PC-3 (cell line): ENCODE measurements at regions of chr13 and their contacts with region 1.

Region 1: GRCh38 chr13:83498495-83499190 is 383.6 kb downstream of the SLITRK1 start:
- DNase-seq: peak; percentile 80
- ATAC-seq: peak; percentile 82
- H3K4me3 ChIP-seq: peak overlapping the region; percentile 30; the same call in 1 of the 2 replicates
- H3K27ac ChIP-seq: peak overlapping the region; percentile 99
- H3K4me1 ChIP-seq: peaks cover 33% of the 10 kb centered on the region
- H3K27me3 ChIP-seq: no peaks in the 10 kb centered on the region
- CTCF ChIP-seq: no peak

Region 2: GRCh38 chr13:83221813-83222241 is 276.8 kb before region 1 on chr13:
- CTCF ChIA-PET with region 1: no interaction called
- POLR2A ChIA-PET with region 1: no interaction called
- intact Hi-C with region 1: loop called (anchors 5 kb)
- DNase-seq: peak; percentile 93
- ATAC-seq: peak; percentile 84
- H3K4me3 ChIP-seq: no peak overlapping the region; the same call in 1 of the 2 replicates
- H3K27ac ChIP-seq: peak overlapping the region; percentile 98
- H3K4me1 ChIP-seq: peaks cover 23% of the 10 kb centered on the region
- H3K27me3 ChIP-seq: no peaks in the 10 kb centered on the region
- CTCF ChIP-seq: no peak

Region 3: GRCh38 chr13:83272652-83273240 is 225.9 kb before region 1 on chr13:
- CTCF ChIA-PET with region 1: no interaction called
- POLR2A ChIA-PET with region 1: no interaction called
- intact Hi-C with region 1: no loop called
- DNase-seq: no peak
- ATAC-seq: no peak
- H3K4me3 ChIP-seq: no peak overlapping the region
- H3K27ac ChIP-seq: no peak overlapping the region
- H3K4me1 ChIP-seq: 0 out of 2 replicates have a peak, but pooled peaks cover 2% of the 10 kb centered on the region
- H3K27me3 ChIP-seq: no peaks in the 10 kb centered on the region
- CTCF ChIP-seq: no peak

Region 4: GRCh38 chr13:83350569-83350968 is 148.1 kb before region 1 on chr13:
- CTCF ChIA-PET with region 1: no interaction called
- POLR2A ChIA-PET with region 1: no interaction called
- intact Hi-C with region 1: loop called (anchors 10 kb)
- DNase-seq: peak; percentile 71
- ATAC-seq: peak; percentile 95
- H3K4me3 ChIP-seq: peak overlapping the region; percentile 29; the same call in 1 of the 2 replicates
- H3K27ac ChIP-seq: peak overlapping the region; percentile 72
- H3K4me1 ChIP-seq: peaks cover 16% of the 10 kb centered on the region
- H3K27me3 ChIP-seq: no peaks in the 10 kb centered on the region
- CTCF ChIP-seq: no peak

Region 5: DNA sequence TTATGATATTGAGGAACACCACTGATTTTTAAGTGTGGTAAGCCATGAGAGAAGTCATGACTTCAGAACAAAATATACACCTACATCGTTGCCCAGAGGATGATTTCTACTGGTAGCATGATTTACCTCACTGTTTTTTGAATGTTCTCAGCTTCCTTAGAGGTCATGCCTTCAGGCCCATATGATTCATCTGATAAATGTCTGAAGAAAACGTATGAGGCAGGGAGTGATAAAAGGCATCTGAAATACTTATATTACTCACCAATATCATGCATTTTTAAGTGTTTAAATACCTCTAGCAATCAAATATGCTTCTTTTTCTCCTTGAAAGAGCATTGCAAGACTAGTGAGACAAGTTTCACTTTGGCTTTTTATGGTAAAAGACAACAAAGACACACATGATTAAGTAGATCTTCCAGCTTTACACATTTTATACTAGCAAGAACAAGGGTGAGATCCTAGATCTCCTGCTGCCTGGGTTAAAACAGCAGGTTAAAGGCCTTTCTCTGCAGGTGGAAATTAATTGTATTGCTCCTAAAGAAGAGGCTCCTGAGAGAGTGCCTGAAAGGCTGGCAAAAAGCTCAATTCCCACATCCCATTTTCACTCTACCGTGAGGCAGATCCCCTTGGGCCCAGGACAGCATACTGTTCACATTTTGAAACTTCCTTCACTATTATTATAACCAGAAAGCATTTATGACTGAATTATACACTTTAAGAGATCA is 48.8 kb before region 1 on chr13:
- CTCF ChIA-PET with region 1: no interaction called
- POLR2A ChIA-PET with region 1: no interaction called
- intact Hi-C with region 1: loop called (anchors 2 kb)
- DNase-seq: peak; percentile 72
- ATAC-seq: peak; percentile 87
- H3K4me3 ChIP-seq: no peak overlapping the region
- H3K27ac ChIP-seq: peak overlapping the region; percentile 46
- H3K4me1 ChIP-seq: peaks cover 20% of the 10 kb centered on the region
- H3K27me3 ChIP-seq: no peaks in the 10 kb centered on the region
- CTCF ChIP-seq: no peak

Region 6: DNA sequence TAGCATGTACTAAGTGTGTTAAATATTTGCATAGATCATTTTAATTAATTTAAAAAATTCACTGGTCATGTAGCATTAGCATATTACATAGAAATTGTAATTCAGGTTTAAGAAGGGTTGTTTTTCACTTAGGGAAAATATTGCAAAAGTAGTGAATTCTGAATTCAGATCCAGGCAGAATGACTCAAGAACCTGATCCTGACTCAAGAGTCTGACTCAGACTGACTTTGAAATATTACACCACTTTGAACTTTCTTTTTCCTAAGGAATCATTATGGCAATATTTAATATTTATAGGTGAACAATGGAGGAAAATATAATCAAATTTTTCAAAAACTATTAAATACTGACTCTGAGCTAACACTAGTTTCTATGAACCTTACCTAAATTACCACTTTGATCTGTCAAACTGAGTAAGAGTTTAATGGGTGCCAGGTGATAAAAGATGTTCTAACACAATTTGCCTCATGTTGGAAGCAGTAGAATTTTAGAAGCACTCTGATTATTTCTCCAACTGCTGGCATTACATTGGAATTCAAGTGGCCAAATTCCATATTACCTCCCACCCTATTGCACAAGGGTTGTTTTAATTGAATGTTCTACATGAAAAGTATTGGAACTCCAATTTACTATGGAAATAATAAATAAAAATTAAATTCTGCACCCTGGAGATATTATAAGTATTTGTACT is 122.0 kb after region 1 on chr13:
- CTCF ChIA-PET with region 1: no interaction called
- POLR2A ChIA-PET with region 1: no interaction called
- intact Hi-C with region 1: loop called (anchors 5 kb)
- DNase-seq: peak; percentile 71
- ATAC-seq: peak; percentile 47; the same call in 1 of the 2 replicates
- H3K4me3 ChIP-seq: no peak overlapping the region
- H3K27ac ChIP-seq: peak overlapping the region; percentile 63
- H3K4me1 ChIP-seq: peaks cover 22% of the 10 kb centered on the region
- H3K27me3 ChIP-seq: no peaks in the 10 kb centered on the region
- CTCF ChIP-seq: no peak

Region 7: DNA sequence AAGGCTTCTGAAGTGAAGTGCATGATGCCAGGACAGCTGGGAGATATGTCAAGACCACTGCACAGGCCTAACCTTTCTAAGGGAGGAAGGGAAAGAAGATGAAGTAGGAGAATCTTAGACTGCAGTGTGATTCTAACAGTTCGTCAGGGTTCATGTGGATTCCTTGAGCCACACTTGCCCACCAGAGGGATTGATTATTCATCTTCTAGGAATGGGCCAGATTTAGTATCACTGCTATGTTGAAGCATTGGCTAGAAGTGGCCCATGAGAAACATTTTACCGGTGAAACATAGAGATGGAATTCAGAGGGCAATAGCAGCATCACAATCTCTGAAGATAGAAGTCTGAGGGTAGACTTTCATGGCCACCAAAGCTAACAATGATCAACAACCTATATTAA is 934.4 kb after region 1 on chr13:
- CTCF ChIA-PET with region 1: no interaction called
- POLR2A ChIA-PET with region 1: no interaction called
- intact Hi-C with region 1: no loop called
- DNase-seq: no peak
- ATAC-seq: no peak
- H3K4me3 ChIP-seq: no peak overlapping the region
- H3K27ac ChIP-seq: no peak overlapping the region
- H3K4me1 ChIP-seq: no peaks in the 10 kb centered on the region
- H3K27me3 ChIP-seq: no peaks in the 10 kb centered on the region
- CTCF ChIP-seq: no peak